Testis (tissue), 5 donors: ENCODE measurements at regions of chr2 and their contacts with region 1.

Region 1: GRCh38 chr2:219294356-219295351 is 14.5 kb downstream of the PTPRN start:
- DNase-seq: peak; percentile 93
- H3K4me3 ChIP-seq: peak overlapping the region; percentile 50 to 71
- H3K27ac ChIP-seq: peak overlapping the region; percentile 74 to 81
- H3K4me1 ChIP-seq: peaks cover 12% of the 10 kb centered on the region
- H3K27me3 ChIP-seq: no peaks in the 10 kb centered on the region
- CTCF ChIP-seq: peak; percentile 97 to 99 (median 99)
- POLR2A ChIP-seq: no peak

Region 2: DNA sequence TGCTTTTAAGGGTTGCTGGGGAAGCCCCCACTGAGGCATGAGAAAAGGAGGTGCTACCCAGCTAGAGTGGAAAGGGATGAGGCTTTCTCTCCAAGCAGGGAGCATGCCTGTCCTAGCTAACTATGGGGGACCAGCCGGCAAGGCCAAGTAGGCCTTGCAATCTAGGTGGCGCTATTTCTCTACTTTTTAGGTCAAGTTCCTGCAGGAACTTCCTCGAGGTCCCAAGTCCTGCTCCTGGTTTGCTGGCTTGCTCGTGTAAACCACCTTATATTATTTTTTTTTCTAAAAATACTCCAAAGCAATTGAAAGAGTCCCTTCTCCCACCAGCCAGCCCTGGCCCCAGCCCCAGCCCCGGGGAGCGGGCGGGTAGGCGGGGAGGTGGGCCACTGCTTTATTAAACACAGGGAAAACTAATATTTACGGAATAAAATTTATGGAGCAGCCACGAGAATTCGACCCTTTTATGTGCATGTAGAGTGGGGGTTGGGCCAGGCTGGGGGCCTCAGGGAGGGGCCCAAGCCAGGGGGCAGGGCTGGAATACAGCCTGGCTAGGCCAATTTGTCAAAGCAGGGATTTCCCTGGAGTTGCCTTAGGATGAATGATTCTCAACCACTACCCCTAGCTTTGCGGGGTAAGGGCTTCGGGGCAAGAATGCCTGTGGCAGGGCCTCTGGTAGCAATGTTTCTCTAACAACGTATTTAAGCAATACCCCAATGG is 221.1 kb before region 1 on chr2:
- intact Hi-C with region 1: no loop called
- DNase-seq: peak; percentile 51
- H3K4me3 ChIP-seq: no peak overlapping the region
- H3K27ac ChIP-seq: no peak overlapping the region
- H3K4me1 ChIP-seq: no peaks in the 10 kb centered on the region
- H3K27me3 ChIP-seq: no peaks in the 10 kb centered on the region
- CTCF ChIP-seq: peak in 2 of 3 experiments; percentile 29 to 35
- POLR2A ChIP-seq: no peak

Region 3: DNA sequence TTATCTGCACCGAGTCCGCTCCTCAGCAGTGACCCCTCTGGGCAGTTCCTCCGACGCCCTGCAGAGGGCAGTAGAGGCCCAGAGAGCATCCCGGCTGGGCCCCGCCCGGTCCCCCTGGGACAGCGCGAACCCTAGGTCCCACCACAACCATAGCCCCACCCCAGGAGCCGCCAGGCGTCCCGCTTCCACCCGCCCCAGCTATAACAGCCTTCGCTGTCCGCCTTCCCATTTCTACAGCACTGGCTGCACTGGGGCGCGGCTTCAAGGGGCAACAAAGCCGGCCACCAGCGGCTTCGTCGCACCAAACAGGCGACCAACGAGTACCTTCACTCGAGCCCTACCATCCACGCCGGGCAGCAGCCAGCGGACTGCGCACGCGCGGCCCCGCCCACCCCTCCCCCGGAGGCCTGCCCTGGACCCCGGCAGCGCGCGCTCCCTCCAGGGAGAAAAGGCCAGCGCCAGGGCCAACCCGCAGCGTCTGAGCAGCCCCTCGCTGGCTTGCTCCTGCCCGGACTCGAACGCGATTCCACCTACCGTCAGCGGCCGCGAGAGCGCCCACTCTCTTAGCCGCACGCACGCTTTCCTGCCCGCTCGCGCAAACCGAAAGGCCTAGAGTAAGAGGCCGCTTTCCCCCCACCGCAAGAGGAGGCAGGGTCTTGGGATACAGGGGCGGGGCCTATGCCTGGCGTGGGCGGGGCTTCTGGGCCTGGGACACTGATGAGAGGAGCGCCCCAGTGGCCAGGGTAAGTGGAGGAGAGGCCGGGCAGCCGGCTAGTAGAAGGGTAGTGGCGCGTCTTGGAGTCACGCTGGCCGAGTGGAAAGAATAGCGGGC is 134.3 kb before region 1 on chr2 and contains the start of gene NHEJ1:
- intact Hi-C with region 1: loop called (anchors 5 kb)
- DNase-seq: peak; percentile 98
- H3K4me3 ChIP-seq: peak within 1 kb of the TSS; percentile 67 to 85
- H3K27ac ChIP-seq: peak within 1 kb of the TSS; percentile 93 to 96
- H3K4me1 ChIP-seq: no peaks in the 10 kb centered on the region
- H3K27me3 ChIP-seq: no peaks in the 10 kb centered on the region
- CTCF ChIP-seq: peak; percentile 96 to 98 (median 97)
- POLR2A ChIP-seq: no peak
- total RNA-seq, gene NHEJ1: 33.4 to 38.5 TPM